ENCODE measurements at regions of chr10 and their contacts with region 1.

Region 1: GRCh38 chr10:110304780-110305421 is at the start of gene SMNDC1:
- DNase-seq: peak; percentile 99
- H3K4me3 Mint-ChIP-seq: peak within 1 kb of the TSS; percentile 97
- H3K27ac Mint-ChIP-seq: peak within 1 kb of the TSS; percentile 95
- H3K4me1 Mint-ChIP-seq: peaks cover 39% of the 10 kb centered on the region
- H3K27me3 Mint-ChIP-seq: no peaks in the 10 kb centered on the region
- total RNA-seq, gene SMNDC1: 46.2 TPM in 2 replicates

Region 2: DNA sequence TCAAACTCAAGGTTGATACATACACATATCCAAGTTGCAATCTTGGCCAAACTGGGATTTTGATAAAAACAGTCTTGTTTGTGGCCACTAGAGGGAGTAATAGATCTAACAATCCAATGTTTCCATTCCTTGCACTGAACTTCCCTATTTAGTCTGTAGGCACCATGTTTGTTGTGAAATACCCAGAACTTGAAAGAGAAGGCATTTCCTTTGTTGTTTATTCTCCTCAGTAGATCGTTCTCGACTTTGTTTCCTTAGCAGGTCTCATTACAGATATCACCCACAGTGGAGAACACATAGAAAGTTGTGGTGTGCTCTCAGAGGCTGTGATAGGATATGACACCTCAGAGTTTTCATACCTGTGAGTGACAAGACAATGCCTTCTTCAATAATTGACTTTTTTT is 167.8 kb before region 1 on chr10:
- intact Hi-C with region 1: loop called (anchors 1 kb)
- DNase-seq: peak; percentile 77
- H3K4me3 Mint-ChIP-seq: no peak overlapping the region
- H3K27ac Mint-ChIP-seq: peak overlapping the region; percentile 64
- H3K4me1 Mint-ChIP-seq: peaks cover 25% of the 10 kb centered on the region
- H3K27me3 Mint-ChIP-seq: no peaks in the 10 kb centered on the region

Region 3: GRCh38 chr10:110497438-110498086 is 192.7 kb after region 1 on chr10 and contains the start of gene DUSP5:
- intact Hi-C with region 1: loop called (anchors 1 kb)
- DNase-seq: peak; percentile 99
- H3K4me3 Mint-ChIP-seq: peak within 1 kb of the TSS; percentile 99
- H3K27ac Mint-ChIP-seq: peak within 1 kb of the TSS; percentile 92
- H3K4me1 Mint-ChIP-seq: peaks cover 47% of the 10 kb centered on the region
- H3K27me3 Mint-ChIP-seq: no peaks in the 10 kb centered on the region
- total RNA-seq, gene DUSP5: 76.0 and 79.9 TPM in 2 replicates

Region 4: DNA sequence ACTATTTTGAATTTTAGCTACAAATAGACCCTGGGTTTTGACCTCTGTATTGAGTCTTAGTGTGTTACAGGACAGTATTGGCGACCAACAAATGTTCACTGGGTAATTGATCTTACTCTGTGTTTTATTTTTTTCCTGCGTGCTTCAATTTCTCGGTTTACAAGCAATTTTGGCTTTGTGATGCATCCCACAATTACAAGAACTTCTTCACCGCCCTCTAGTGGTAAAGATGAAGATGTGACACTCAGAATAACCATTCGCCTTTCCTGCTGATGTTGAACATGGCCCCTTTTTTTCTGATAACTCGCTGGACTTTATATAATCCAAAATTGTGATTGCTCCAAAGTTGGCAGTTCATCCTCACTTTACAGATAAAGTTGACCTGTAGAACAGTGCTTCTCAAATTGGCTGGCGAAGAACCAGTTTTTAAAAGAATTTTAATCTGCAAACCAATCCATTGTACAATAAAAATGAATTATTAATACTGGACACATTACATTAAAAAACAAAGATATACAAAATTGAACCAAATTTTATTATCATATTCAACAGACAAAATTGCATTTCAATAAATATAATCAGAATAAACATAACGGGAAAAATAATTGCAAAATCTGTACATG is 242.3 kb after region 1 on chr10:
- intact Hi-C with region 1: loop called (anchors 1 kb)
- DNase-seq: peak; percentile 77
- H3K4me3 Mint-ChIP-seq: peak overlapping the region; percentile 47
- H3K27ac Mint-ChIP-seq: peak overlapping the region; percentile 10
- H3K4me1 Mint-ChIP-seq: peaks cover 19% of the 10 kb centered on the region
- H3K27me3 Mint-ChIP-seq: peaks cover 28% of the 10 kb centered on the region

Region 5: GRCh38 chr10:110600487-110601101 is 295.7 kb after region 1 on chr10:
- intact Hi-C with region 1: loop called (anchors 1 kb)
- DNase-seq: peak; percentile 84
- H3K4me3 Mint-ChIP-seq: no peak overlapping the region
- H3K27ac Mint-ChIP-seq: no peak overlapping the region
- H3K4me1 Mint-ChIP-seq: peaks cover 2% of the 10 kb centered on the region
- H3K27me3 Mint-ChIP-seq: no peaks in the 10 kb centered on the region

Region 6: DNA sequence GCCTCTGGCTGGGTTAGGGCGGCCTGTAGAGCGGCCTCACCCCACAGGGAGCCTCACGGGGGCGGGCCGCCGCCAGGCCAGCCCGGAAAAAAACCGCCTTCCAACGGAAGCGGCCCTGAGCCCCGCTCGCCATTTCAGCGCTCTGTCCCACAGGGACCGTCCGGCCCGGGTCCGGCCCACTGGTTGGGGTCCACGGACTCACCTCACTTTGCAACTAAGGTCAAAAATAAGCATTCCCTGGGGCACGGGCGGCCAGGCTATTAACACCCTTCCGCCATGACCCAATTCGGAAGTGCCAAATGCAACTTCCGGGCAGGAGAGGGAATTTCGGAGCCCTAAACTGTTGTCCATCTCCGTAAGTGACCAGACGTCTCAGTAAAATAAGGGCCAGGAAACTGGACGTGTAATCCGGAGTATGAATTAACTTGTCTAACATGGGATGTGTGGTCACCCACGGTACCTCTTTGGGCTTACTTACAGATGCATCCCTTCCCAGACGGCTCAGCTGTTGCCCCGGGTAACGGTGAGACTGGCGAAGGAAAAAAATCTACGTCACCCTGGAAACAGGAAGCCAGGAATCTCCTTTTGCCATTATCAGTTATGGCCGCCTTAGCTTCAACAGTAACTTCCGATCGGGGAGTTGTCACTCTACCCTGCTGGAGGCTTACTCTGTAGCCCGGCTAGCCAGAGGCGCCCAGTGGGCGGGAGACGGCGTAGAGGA is 613.9 kb after region 1 on chr10 and contains the start of gene BBIP1:
- intact Hi-C with region 1: loop called (anchors 1 kb)
- DNase-seq: no peak
- H3K4me3 Mint-ChIP-seq: peak within 1 kb of the TSS; percentile 91
- H3K27ac Mint-ChIP-seq: peak within 1 kb of the TSS; percentile 99
- H3K4me1 Mint-ChIP-seq: peaks cover 36% of the 10 kb centered on the region
- H3K27me3 Mint-ChIP-seq: no peaks in the 10 kb centered on the region
- total RNA-seq, gene BBIP1: 26.3 and 31.1 TPM in 2 replicates